ENCODE measurements at regions of chr11 and their contacts with region 1.

Region 1: DNA sequence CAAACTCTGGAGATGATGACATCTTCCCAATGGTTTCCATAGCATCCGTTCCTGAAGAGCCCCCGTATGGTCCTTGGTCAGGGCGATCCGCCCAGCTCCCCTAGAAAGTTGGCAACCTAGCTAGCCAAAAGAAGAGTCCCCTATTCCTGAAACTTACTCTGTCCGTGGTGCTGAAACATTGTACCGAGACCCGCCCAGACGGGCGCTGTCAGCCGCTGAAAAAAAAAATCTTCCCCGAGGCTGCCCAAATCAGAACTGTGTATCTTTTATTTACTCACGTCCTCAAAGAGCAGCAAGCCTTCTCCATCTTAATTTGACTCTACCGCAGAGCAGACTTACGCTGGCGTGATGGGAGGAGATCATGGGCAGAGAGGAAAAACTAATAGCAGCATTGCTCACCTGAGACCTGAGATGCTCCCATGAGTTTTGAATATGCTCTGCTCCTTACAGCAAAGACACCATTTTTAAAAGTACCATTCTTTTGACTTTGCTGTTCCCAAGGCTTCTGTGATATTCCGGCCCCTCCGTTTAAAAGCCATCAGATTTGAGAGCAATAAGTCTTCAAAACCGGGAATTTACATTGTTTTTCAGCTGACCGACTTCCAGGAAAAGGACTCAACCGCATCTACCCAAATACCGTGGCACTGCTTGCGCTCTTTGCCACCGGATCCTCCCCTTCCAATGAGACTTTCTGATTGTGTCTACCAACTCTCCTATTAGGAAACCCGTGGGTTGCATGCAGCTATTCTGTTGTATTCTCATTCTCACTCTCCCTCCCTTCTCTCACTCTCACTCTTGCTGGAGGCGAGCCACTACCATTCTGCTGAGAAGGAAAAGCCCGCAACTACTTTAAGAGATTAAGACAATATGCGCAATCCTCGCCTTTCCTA is at the start of gene SLC17A6:
- DNase-seq: peak in 1 of 2 donors; percentile 28
- ATAC-seq: no peak
- H3K4me3 ChIP-seq: no peak within 1 kb of the TSS
- H3K4me3 Mint-ChIP-seq: no peak within 1 kb of the TSS
- H3K27ac ChIP-seq: no peak within 1 kb of the TSS
- H3K27ac Mint-ChIP-seq: no peak within 1 kb of the TSS
- H3K4me1 ChIP-seq: no peaks in the 10 kb centered on the region
- H3K4me1 Mint-ChIP-seq: peaks cover 0 to 7% of the 10 kb centered on the region in 2 donors
- H3K27me3 ChIP-seq: peaks cover 33% of the 10 kb centered on the region
- H3K27me3 Mint-ChIP-seq: peaks cover 50 to 59% of the 10 kb centered on the region in 2 donors
- CTCF ChIP-seq: no peak
- total RNA-seq, gene SLC17A6: not detected

Region 2: GRCh38 chr11:22730319-22730718 is 392.5 kb after region 1 on chr11:
- intact Hi-C with region 1: loop called (anchors 2 kb)
- DNase-seq: peak in 1 of 2 donors; percentile 57
- ATAC-seq: no peak
- H3K4me3 ChIP-seq: no peak overlapping the region
- H3K4me3 Mint-ChIP-seq: no peak overlapping the region
- H3K27ac ChIP-seq: no peak overlapping the region
- H3K27ac Mint-ChIP-seq: no peak overlapping the region
- H3K4me1 ChIP-seq: no peaks in the 10 kb centered on the region
- H3K4me1 Mint-ChIP-seq: peaks cover 0 to 8% of the 10 kb centered on the region in 2 donors
- H3K27me3 ChIP-seq: no peaks in the 10 kb centered on the region
- H3K27me3 Mint-ChIP-seq: no peaks in the 10 kb centered on the region
- CTCF ChIP-seq: peak; percentile 14

Region 3: DNA sequence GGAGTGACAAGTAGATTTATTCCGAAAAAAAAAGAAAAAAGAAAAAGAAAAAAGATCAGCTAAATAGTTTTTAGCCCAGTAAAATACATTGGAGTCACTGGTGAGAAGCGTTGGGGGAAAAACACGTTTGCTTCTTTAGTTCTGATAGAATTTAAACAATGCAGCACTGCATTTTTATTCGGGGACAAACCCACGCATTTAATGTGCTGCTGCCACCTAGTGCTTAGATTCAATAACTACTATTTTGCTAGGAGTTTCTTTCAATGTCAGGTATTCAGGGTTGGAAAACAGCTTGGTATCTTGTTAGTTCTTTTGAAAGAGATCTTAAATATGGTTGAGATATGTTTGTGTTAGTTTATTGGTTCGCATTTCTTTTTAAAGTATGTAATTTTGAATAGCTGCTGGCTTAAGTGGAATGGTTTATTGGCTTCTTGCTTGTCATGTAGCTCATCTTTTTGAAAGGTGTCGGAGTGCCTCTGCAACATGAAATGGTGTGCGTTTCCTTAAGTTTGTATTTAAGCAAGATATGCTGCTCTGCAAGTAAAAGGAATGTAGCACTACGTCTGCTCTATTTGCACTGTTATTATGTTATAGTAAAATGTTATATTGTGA is 449.8 kb after region 1 on chr11:
- intact Hi-C with region 1: loop called (anchors 1 kb)
- DNase-seq: peak in 1 of 2 donors; percentile 65
- ATAC-seq: peak in 2 of 3 donors; percentile 58 to 69
- H3K4me3 ChIP-seq: no peak overlapping the region
- H3K4me3 Mint-ChIP-seq: no peak overlapping the region
- H3K27ac ChIP-seq: no peak overlapping the region
- H3K27ac Mint-ChIP-seq: no peak overlapping the region
- H3K4me1 ChIP-seq: no peaks in the 10 kb centered on the region
- H3K4me1 Mint-ChIP-seq: peaks cover 0 to 4% of the 10 kb centered on the region in 2 donors
- H3K27me3 ChIP-seq: no peaks in the 10 kb centered on the region
- H3K27me3 Mint-ChIP-seq: no peaks in the 10 kb centered on the region
- CTCF ChIP-seq: peak; percentile 87